HEK293 (cell line): ENCODE measurements at regions of chr11 and their contacts with region 1.

Region 1: GRCh38 chr11:44095506-44096394 is at the start of gene EXT2:
- H3K4me3 ChIP-seq: peak within 1 kb of the TSS; percentile 95
- H3K27ac ChIP-seq: peak within 1 kb of the TSS; percentile 72
- H3K4me1 ChIP-seq: no peaks in the 10 kb centered on the region
- CTCF ChIP-seq: peak; percentile 85

Region 2: GRCh38 chr11:44065841-44066731 is 29.7 kb before region 1 on chr11 and contains the start of gene ACCS:
- CTCF ChIA-PET with region 1: interaction called, 15 read pairs
- POLR2A ChIA-PET with region 1: no interaction called
- H3K4me3 ChIP-seq: peak within 1 kb of the TSS; percentile 46
- H3K27ac ChIP-seq: peak within 1 kb of the TSS; percentile 72
- H3K4me1 ChIP-seq: no peaks in the 10 kb centered on the region
- CTCF ChIP-seq: peak; percentile 92

Region 3: GRCh38 chr11:44083906-44084305 is 11.8 kb before region 1 on chr11:
- CTCF ChIA-PET with region 1: interaction called, 64 read pairs
- POLR2A ChIA-PET with region 1: no interaction called
- H3K4me3 ChIP-seq: no peak overlapping the region
- H3K27ac ChIP-seq: no peak overlapping the region
- H3K4me1 ChIP-seq: no peaks in the 10 kb centered on the region
- CTCF ChIP-seq: no peak

Region 4: DNA sequence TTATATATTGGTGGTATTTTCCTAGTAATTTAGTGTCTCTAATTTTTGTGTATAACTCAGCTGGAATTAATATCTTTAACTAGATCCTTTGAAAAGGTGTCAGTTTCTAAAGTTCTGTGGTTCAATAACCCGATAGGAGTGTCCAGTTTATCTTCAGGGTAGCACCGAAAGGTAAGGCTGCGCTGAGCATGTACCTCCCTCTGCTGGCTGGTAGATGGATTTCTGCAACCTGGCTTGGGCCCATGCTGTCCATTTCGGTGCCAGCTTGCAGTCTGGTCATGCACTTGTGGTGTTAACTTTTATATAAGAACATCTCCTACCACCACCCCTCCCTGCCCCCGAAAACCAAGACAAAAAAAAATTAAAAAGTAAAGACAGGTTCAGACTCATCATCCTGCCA is 24.4 kb after region 1 on chr11:
- CTCF ChIA-PET with region 1: interaction called, 11 read pairs
- POLR2A ChIA-PET with region 1: no interaction called
- H3K4me3 ChIP-seq: no peak overlapping the region
- H3K27ac ChIP-seq: no peak overlapping the region
- H3K4me1 ChIP-seq: no peaks in the 10 kb centered on the region
- CTCF ChIP-seq: no peak

Region 5: GRCh38 chr11:44243595-44244343 is 148.0 kb after region 1 on chr11:
- CTCF ChIA-PET with region 1: no interaction called
- POLR2A ChIA-PET with region 1: no interaction called
- H3K4me3 ChIP-seq: no peak overlapping the region
- H3K27ac ChIP-seq: no peak overlapping the region
- H3K4me1 ChIP-seq: no peaks in the 10 kb centered on the region
- CTCF ChIP-seq: no peak

Region 6: GRCh38 chr11:44538375-44539054 is 442.8 kb after region 1 on chr11:
- CTCF ChIA-PET with region 1: interaction called, 19 read pairs
- POLR2A ChIA-PET with region 1: no interaction called
- H3K4me3 ChIP-seq: no peak overlapping the region
- H3K27ac ChIP-seq: no peak overlapping the region
- H3K4me1 ChIP-seq: no peaks in the 10 kb centered on the region
- CTCF ChIP-seq: peak; percentile 80